WTC11 (cell line): ENCODE measurements at regions of chr1 and their contacts with region 1.

Region 1: GRCh38 chr1:27959400-27960217 is at the start of gene XKR8:
- DNase-seq: peak; percentile 86
- ATAC-seq: peak; percentile 89
- H3K4me3 Mint-ChIP-seq: peak within 1 kb of the TSS; percentile 79
- H3K27ac Mint-ChIP-seq: peak within 1 kb of the TSS; percentile 98
- H3K4me1 Mint-ChIP-seq: peaks cover 24% of the 10 kb centered on the region
- H3K27me3 Mint-ChIP-seq: no peaks in the 10 kb centered on the region
- CTCF ChIP-seq: no peak
- total RNA-seq, gene XKR8: 15.0 to 16.4 TPM (median 15.5 TPM) in 3 replicates

Region 2: GRCh38 chr1:27940297-27940696 is 19.3 kb before region 1 on chr1:
- CTCF ChIA-PET with region 1: interaction called, 17 read pairs
- POLR2A ChIA-PET with region 1: interaction called, 5 read pairs
- DNase-seq: peak; percentile 66
- ATAC-seq: peak; percentile 44
- H3K4me3 Mint-ChIP-seq: no peak overlapping the region
- H3K27ac Mint-ChIP-seq: peak overlapping the region; percentile 10; the same call in 1 of the 2 replicates
- H3K4me1 Mint-ChIP-seq: peaks cover 35% of the 10 kb centered on the region
- H3K27me3 Mint-ChIP-seq: no peaks in the 10 kb centered on the region; the same call in 1 of the 2 replicates
- CTCF ChIP-seq: peak; percentile 50; the same call in 1 of the 2 replicates